Dorsolateral prefrontal cortex (tissue), 120 donors: ENCODE measurements at regions of chr12 and their contacts with region 1.

Region 1: GRCh38 chr12:98998697-98999299 is 353.7 kb downstream of the APAF1 start:
- DNase-seq: no peak
- H3K4me3 ChIP-seq: peak overlapping the region in 23 of 59 donors; percentile 2 to 48 (median 15)
- H3K27ac ChIP-seq: peak overlapping the region in 42 of 59 donors; percentile 2 to 78 (median 38)
- H3K27me3 ChIP-seq: no peaks in the 10 kb centered on the region
- CTCF ChIP-seq: peak; percentile 47 to 89 (median 77)

Region 2: GRCh38 chr12:98424726-98425401 is 573.9 kb before region 1 on chr12:
- intact Hi-C with region 1: loop called in 1 of 2 experiments (anchors 5 kb)
- DNase-seq: peak in 9 of 10 donors; percentile 38 to 77 (median 63)
- H3K4me3 ChIP-seq: peak overlapping the region in 1 of 59 donors; percentile 17
- H3K27ac ChIP-seq: no peak overlapping the region
- H3K27me3 ChIP-seq: no peaks in the 10 kb centered on the region
- CTCF ChIP-seq: peak; percentile 53 to 84 (median 73)

Region 3: GRCh38 chr12:98572010-98572409 is 426.8 kb before region 1 on chr12:
- intact Hi-C with region 1: loop called in 1 of 2 experiments (anchors 5 kb)
- DNase-seq: no peak
- H3K4me3 ChIP-seq: no peak overlapping the region
- H3K27ac ChIP-seq: no peak overlapping the region
- H3K27me3 ChIP-seq: no peaks in the 10 kb centered on the region
- CTCF ChIP-seq: peak in 8 of 56 donors; percentile 6 to 21 (median 10)

Region 4: DNA sequence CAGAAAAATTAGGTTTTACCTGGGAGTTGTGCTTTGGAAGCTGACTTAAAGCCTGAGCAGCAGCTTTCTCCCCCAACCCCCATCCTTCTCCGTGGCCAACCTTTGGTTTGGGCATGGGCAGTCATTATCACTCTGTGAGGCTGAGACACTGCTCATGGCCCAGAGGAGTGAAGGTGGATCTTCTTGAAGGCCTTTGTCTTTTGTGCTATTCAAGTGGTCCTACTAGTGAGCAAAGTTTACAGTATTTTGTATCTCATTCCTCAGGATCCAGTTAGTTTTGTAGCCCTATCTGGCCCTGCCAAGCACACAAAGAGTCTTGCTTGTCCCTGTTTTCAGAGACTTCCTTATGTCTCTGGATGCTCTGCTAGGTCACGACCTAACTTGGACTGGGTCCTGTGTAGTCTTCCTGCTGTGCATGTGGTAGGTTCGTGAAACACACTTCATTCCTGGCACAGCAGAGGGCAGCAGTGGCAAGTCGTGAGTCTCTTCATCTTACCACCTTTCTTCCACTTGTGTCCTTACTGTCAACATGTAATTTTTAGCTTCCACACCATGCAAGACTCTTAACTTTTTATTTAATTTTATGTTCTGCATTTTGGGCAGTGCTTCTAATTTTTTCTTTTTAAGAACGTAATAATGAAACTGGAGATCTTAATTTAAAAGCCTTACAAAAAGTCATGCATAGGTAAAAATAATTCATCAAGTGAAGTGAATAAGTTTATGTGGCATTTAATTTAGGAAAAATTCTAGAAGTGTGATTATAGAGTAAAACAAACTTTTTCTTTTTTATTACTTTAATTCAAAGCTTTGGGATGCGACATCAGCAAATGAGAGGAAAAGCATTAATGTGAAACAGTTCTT is 300.0 kb before region 1 on chr12:
- intact Hi-C with region 1: loop called in 1 of 2 experiments (anchors 5 kb)
- DNase-seq: peak; percentile 54 to 81 (median 72)
- H3K4me3 ChIP-seq: no peak overlapping the region
- H3K27ac ChIP-seq: peak overlapping the region in 5 of 59 donors; percentile 3 to 42 (median 36)
- H3K27me3 ChIP-seq: no peaks in the 10 kb centered on the region
- CTCF ChIP-seq: peak in 55 of 56 donors; percentile 35 to 88 (median 75)

Region 5: GRCh38 chr12:98725476-98726247 is 273.1 kb before region 1 on chr12:
- intact Hi-C with region 1: loop called in 1 of 2 experiments (anchors 10 kb)
- DNase-seq: peak; percentile 55 to 90 (median 74)
- H3K4me3 ChIP-seq: peak overlapping the region in 23 of 59 donors; percentile 1 to 45 (median 22)
- H3K27ac ChIP-seq: peak overlapping the region; percentile 39 to 94 (median 84)
- H3K27me3 ChIP-seq: no peaks in the 10 kb centered on the region
- CTCF ChIP-seq: peak in 55 of 56 donors; percentile 25 to 78 (median 58)

Region 6: GRCh38 chr12:98909749-98910148 is 89.0 kb before region 1 on chr12:
- intact Hi-C with region 1: no loop called
- DNase-seq: peak in 1 of 10 donors; percentile 85
- H3K4me3 ChIP-seq: no peak overlapping the region
- H3K27ac ChIP-seq: peak overlapping the region in 8 of 59 donors; percentile 1 to 46 (median 15)
- H3K27me3 ChIP-seq: no peaks in the 10 kb centered on the region
- CTCF ChIP-seq: no peak

Region 7: DNA sequence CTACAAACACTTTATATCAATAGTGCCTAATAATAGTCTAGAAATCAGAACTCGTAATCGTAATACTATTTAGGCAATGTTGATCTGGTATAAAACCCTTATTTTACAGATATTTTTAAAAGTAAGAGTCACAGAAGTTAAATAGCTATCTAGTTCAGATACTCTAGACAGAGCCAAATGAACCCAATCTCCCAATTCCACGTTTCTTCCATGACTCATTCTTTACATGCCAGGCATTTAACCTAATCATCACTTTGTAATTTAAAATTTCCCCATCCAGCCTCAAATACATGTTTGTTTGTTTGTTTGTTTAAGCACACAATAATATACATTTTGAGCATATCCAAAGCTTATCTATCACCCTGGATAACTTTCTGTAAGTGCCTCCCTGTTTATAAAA is 612.3 kb after region 1 on chr12:
- intact Hi-C with region 1: no loop called
- DNase-seq: no peak
- H3K4me3 ChIP-seq: no peak overlapping the region
- H3K27ac ChIP-seq: no peak overlapping the region
- H3K27me3 ChIP-seq: no peaks in the 10 kb centered on the region
- CTCF ChIP-seq: no peak